Activated CD4-positive, alpha-beta memory T cell treated with anti-CD3 and anti-CD28 coated beads for 36 hours (primary cell): ENCODE measurements at regions of chr7 and their contacts with region 1.

Region 1: GRCh38 chr7:92904292-92905131 is 68.1 kb upstream of the CDK6 start:
- DNase-seq: peak; percentile 95
- H3K4me3 Mint-ChIP-seq: peak overlapping the region; percentile 29
- H3K27ac Mint-ChIP-seq: peak overlapping the region; percentile 88
- H3K4me1 Mint-ChIP-seq: peaks cover 31% of the 10 kb centered on the region
- H3K27me3 Mint-ChIP-seq: no peaks in the 10 kb centered on the region

Region 2: GRCh38 chr7:92590711-92591310 is 313.7 kb before region 1 on chr7:
- CTCF ChIA-PET with region 1: no interaction called
- POLR2A ChIA-PET with region 1: no interaction called
- intact Hi-C with region 1: loop called (anchors 1 kb)
- DNase-seq: no peak
- H3K4me3 Mint-ChIP-seq: peak overlapping the region; percentile 48
- H3K27ac Mint-ChIP-seq: no peak overlapping the region
- H3K4me1 Mint-ChIP-seq: peaks cover 42% of the 10 kb centered on the region
- H3K27me3 Mint-ChIP-seq: no peaks in the 10 kb centered on the region

Region 3: DNA sequence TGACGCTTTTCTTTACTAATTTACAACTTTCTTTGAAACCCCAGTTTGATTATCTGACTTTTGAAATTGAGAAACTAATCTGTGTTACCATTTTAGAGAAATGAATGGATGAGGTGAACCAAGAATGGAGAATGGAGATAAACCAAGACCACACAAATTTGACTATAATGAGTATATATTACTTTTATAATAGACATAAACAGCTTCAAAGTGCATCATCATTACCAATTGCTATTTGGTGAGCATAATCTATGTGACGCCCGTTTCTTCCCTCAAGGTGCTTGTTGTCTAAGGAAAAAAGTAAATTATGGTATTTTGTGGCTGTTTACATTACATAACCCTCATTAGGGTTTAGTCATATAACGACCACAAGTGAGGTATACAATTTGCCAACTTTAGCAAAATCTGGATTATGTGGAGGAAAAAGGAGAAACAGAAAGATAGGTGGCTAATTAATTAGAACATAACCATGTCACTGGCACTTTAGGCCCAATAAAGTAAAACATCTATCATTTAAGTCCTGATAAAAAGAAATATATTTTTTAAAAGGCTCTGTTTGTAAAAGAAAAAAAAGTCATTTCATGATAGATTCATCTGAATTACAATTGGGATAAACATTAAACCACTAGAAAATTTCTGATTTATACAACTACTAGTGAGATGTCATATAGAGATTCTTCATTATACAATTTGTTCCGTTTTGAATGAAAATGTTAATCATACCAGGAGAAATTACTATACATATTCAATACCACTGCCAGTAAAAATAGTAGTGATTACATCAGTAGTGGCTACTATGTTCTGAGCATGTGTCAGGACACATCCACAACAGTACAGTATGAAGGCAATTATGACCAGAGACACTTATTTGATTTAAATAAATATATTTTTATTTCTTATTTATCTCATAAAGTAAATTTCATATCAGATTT is 196.1 kb before region 1 on chr7:
- CTCF ChIA-PET with region 1: no interaction called
- POLR2A ChIA-PET with region 1: interaction called, 4 read pairs
- intact Hi-C with region 1: loop called (anchors 1 kb)
- DNase-seq: no peak
- H3K4me3 Mint-ChIP-seq: no peak overlapping the region
- H3K27ac Mint-ChIP-seq: peak overlapping the region; percentile 88
- H3K4me1 Mint-ChIP-seq: peaks cover 55% of the 10 kb centered on the region
- H3K27me3 Mint-ChIP-seq: no peaks in the 10 kb centered on the region

Region 4: DNA sequence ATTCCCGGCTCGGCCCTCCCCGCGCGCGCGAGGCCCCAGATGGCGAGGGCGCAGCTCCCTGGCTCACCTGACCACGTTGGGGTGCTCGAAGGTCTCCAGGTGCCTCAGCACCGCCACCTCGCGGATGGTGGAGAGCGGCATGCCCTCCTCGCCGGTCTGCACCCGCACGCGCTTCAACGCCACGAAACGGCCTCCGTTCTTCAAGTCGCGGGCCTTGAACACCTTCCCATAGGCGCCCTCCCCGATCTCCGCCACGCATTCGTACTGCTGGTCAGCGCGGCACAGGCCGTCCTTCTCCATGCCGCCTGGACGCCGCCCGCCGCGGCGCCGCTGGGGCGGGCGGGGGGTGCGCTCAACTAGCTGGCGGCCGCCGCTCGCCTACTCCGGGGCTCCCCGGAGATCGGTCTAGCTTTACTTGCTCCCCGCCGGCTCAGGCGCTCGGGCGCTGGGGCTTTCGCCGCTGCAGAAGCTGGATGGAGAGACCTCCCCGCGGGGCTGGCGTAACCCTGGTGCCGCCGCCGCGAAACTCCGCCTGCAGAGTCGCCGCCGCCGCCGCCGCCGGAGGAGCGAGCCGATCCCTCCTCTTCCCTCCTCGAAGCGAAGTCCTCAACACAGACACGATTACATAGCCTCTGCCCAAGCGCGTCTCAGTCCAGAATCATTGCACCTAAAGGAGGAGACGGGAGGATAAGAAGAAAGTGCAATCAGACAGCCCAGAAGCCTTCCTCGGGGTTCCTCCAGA is 71.3 kb before region 1 on chr7:
- CTCF ChIA-PET with region 1: interaction called, 7 read pairs
- POLR2A ChIA-PET with region 1: interaction called, 13 read pairs
- intact Hi-C with region 1: loop called (anchors 1 kb)
- DNase-seq: peak; percentile 94
- H3K4me3 Mint-ChIP-seq: peak overlapping the region; percentile 97
- H3K27ac Mint-ChIP-seq: peak overlapping the region; percentile 98
- H3K4me1 Mint-ChIP-seq: peaks cover 43% of the 10 kb centered on the region
- H3K27me3 Mint-ChIP-seq: no peaks in the 10 kb centered on the region

Region 5: DNA sequence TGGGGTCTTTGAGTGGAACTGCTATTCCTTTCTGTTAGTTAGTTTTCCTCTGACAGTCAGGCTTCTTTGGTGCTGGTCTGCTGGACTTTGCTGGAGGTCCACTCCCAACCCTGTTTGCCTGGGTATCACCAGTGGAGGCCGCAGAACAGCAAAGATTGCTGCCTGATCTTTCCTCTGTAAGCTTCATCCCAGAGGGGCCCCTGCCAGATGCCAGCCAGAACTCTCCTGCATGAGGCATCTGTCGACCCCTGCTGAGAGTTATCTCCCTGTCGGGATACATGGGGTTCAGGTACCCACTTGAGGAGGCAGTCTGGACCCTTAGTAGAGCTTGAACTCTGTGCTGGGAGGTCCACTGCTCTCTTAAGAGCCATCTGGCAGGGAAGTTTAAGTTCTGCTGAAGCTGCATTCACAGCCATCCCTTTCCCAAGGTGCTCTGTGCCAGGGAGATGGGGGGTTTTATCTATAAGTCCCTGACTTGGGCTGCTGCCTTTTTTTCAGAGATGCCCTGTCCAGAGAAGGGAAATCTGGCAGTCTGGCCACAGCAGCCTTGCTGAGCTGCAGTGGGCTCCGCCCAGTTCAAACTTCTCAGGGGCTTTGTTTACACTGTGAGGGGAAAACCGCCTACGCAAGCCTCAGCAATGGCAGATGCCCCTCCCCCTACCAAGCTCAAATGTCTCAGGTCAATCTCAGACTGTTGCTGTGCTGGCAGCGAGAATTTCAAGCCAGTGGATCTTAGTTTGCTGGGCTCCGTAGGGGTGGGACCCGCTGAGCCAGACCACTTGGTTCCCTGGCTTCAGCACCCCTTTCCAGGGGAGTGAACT is 21.6 kb after region 1 on chr7:
- CTCF ChIA-PET with region 1: no interaction called
- POLR2A ChIA-PET with region 1: no interaction called
- intact Hi-C with region 1: no loop called
- DNase-seq: no peak
- H3K4me3 Mint-ChIP-seq: no peak overlapping the region
- H3K27ac Mint-ChIP-seq: no peak overlapping the region
- H3K4me1 Mint-ChIP-seq: no peaks in the 10 kb centered on the region
- H3K27me3 Mint-ChIP-seq: peaks cover 10% of the 10 kb centered on the region

Region 6: GRCh38 chr7:92953657-92954056 is 49.1 kb after region 1 on chr7:
- CTCF ChIA-PET with region 1: interaction called, 12 read pairs
- POLR2A ChIA-PET with region 1: interaction called, 4 read pairs
- intact Hi-C with region 1: loop called (anchors 1 kb)
- DNase-seq: peak; percentile 31
- H3K4me3 Mint-ChIP-seq: no peak overlapping the region
- H3K27ac Mint-ChIP-seq: peak overlapping the region; percentile 60
- H3K4me1 Mint-ChIP-seq: peaks cover 35% of the 10 kb centered on the region
- H3K27me3 Mint-ChIP-seq: peaks cover 4% of the 10 kb centered on the region

Region 7: DNA sequence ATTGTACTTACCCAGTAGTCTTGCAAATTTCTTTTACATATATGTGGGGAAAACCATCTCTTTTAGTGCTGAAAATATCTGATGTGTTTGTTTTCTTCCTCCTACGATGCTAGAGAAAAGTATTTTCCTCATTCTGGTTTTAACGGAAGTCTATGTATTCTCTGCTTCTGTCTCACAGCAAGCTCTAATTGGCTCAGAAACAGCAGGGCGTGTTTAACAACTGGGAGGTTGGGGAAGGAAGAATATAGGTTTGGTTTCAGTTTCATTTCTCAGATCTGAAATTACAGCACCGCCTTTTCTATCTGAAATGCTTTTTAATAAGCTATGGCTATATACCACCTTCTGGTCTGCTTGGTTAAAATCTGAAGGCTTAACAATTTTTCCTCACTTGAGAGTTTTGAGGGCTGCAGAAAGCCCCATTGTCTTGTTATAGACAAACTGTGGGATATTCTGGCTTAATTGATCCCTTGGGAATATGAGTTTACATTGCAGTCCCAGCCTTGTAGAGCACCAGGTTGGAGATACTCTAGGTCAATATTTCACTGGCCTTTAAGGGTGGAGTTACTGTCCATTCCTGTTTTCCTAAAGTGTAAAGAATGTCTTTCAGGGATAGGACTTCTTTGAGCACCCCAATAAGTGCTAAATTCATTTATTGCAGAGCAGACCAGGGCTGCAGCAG is 213.5 kb after region 1 on chr7 and contains the start of gene SAMD9:
- CTCF ChIA-PET with region 1: interaction called, 3 read pairs
- POLR2A ChIA-PET with region 1: no interaction called
- intact Hi-C with region 1: loop called (anchors 1 kb)
- DNase-seq: peak; percentile 55
- H3K4me3 Mint-ChIP-seq: peak within 1 kb of the TSS; percentile 69
- H3K27ac Mint-ChIP-seq: peak within 1 kb of the TSS; percentile 69
- H3K4me1 Mint-ChIP-seq: peaks cover 50% of the 10 kb centered on the region
- H3K27me3 Mint-ChIP-seq: no peaks in the 10 kb centered on the region
- total RNA-seq, gene SAMD9: 6.9 to 7.2 TPM